Activated CD4-positive, alpha-beta T cell treated with anti-CD3 and anti-CD28 coated beads for 36 hours (primary cell): ENCODE measurements at regions of chr6 and their contacts with region 1.

Region 1: DNA sequence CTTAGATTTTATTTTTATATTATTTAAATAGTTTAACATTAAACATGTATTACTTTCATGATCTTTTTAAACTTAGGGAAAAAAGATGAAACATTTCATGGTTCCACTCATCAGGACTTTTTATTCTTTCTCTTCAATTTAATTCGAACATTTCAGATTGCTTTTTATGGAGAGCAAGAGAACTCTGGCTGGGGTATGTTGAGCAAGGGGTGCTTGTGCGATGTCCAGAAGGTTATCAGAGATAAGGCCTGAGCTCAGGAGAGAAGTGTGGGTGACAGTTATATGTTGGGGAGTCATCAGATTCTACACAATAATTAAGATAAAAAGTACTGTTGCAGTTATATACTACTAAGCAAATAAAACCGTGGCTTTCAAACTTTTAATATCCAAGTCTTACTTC is 37.5 kb downstream of the FKBP5 start:
- DNase-seq: no peak
- ATAC-seq: no peak
- H3K4me3 Mint-ChIP-seq: no peak overlapping the region
- H3K27ac Mint-ChIP-seq: no peak overlapping the region
- H3K4me1 Mint-ChIP-seq: peaks cover 50% of the 10 kb centered on the region
- H3K27me3 Mint-ChIP-seq: no peaks in the 10 kb centered on the region

Region 2: GRCh38 chr6:35611240-35611639 is 40.0 kb before region 1 on chr6:
- CTCF ChIA-PET with region 1: no interaction called
- POLR2A ChIA-PET with region 1: no interaction called
- intact Hi-C with region 1: loop called in 1 of 2 experiments (anchors 2 kb)
- DNase-seq: peak; percentile 48
- ATAC-seq: peak; percentile 84
- H3K4me3 Mint-ChIP-seq: no peak overlapping the region
- H3K27ac Mint-ChIP-seq: peak overlapping the region; percentile 84
- H3K4me1 Mint-ChIP-seq: peaks cover 66% of the 10 kb centered on the region
- H3K27me3 Mint-ChIP-seq: no peaks in the 10 kb centered on the region

Region 3: GRCh38 chr6:35663447-35664235 is 12.4 kb after region 1 on chr6:
- CTCF ChIA-PET with region 1: interaction called, 7 read pairs
- POLR2A ChIA-PET with region 1: interaction called, 3 read pairs
- intact Hi-C with region 1: loop called in 1 of 2 experiments (anchors 1 kb)
- DNase-seq: no peak
- ATAC-seq: peak; percentile 71
- H3K4me3 Mint-ChIP-seq: no peak overlapping the region
- H3K27ac Mint-ChIP-seq: no peak overlapping the region
- H3K4me1 Mint-ChIP-seq: peaks cover 27% of the 10 kb centered on the region
- H3K27me3 Mint-ChIP-seq: no peaks in the 10 kb centered on the region

Region 4: GRCh38 chr6:35857853-35858252 is 206.6 kb after region 1 on chr6:
- CTCF ChIA-PET with region 1: no interaction called
- POLR2A ChIA-PET with region 1: no interaction called
- intact Hi-C with region 1: no loop called
- DNase-seq: no peak
- ATAC-seq: no peak
- H3K4me3 Mint-ChIP-seq: no peak overlapping the region
- H3K27ac Mint-ChIP-seq: no peak overlapping the region
- H3K4me1 Mint-ChIP-seq: peaks cover 4% of the 10 kb centered on the region
- H3K27me3 Mint-ChIP-seq: no peaks in the 10 kb centered on the region

Region 5: GRCh38 chr6:35879151-35879550 is 227.9 kb after region 1 on chr6:
- CTCF ChIA-PET with region 1: no interaction called
- POLR2A ChIA-PET with region 1: no interaction called
- intact Hi-C with region 1: no loop called
- DNase-seq: no peak
- ATAC-seq: no peak
- H3K4me3 Mint-ChIP-seq: no peak overlapping the region
- H3K27ac Mint-ChIP-seq: no peak overlapping the region
- H3K4me1 Mint-ChIP-seq: no peaks in the 10 kb centered on the region
- H3K27me3 Mint-ChIP-seq: no peaks in the 10 kb centered on the region